Left cardiac atrium (tissue), 4 donors: ENCODE measurements at regions of chr13 and their contacts with region 1.

Region 1: DNA sequence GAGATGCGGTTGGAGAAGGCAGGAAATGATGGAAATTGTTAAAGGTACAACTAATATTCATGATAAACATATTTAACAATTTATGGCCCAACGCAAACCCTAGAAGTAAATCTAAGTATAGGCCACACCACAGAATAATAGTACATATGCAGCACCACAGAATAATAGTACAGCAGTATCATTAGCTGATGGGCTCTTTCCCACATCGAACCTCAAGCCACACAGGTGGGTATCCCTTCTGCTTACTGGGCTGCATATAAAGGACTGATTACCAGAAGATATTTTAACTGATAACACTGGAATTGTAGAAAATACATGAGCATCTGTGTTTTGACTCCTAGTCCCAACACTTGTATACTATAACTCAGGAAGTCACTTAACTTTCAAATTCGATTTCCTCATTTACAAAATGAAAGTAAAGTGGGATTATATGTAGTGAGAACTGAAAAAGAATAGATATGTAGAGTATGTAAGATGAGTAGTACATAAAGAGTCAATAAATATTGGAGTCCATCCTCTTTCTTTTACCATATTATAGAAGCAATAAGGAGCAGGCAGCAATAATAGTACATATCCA is 91.5 kb downstream of the TSC22D1 start:
- DNase-seq: no peak
- ATAC-seq: no peak

Region 2: GRCh38 chr13:44380404-44381165 is 104.1 kb before region 1 on chr13:
- intact Hi-C with region 1: no loop called
- DNase-seq: no peak
- ATAC-seq: no peak

Region 3: GRCh38 chr13:44577236-44578066 is 92.8 kb after region 1 on chr13:
- intact Hi-C with region 1: loop called in 1 of 2 experiments (anchors 10 kb)
- DNase-seq: peak; percentile 98
- ATAC-seq: peak; percentile 90 to 92

Region 4: DNA sequence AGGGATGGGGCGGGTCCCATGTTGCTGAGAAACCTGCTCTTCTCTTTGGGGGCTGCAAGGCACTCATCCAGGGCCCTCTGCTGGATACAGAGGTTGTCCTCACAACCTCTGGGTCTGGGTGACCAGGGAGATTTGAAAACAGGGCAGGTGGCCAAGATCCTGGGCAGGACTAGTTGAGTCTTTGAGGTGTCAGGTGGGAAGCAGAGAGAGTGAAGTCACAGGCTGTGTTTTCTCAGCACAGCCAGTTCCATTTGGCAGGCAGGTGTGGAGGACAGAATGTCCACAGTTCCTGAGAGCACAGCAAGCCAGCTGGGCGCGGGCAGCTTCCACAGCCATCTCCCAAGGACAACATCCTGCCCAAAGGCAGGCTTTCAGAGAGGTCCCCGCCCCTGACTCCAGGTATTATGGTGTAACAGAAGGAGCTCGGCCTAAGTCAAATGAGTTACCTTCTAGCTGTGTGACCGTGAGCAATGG is 385.8 kb after region 1 on chr13:
- intact Hi-C with region 1: loop called in 1 of 2 experiments (anchors 5 kb)
- DNase-seq: peak; percentile 71
- ATAC-seq: peak; percentile 40 to 77

Region 5: GRCh38 chr13:44904967-44905366 is 420.3 kb after region 1 on chr13:
- intact Hi-C with region 1: no loop called
- DNase-seq: peak; percentile 45
- ATAC-seq: peak; percentile 25 to 84

Region 6: GRCh38 chr13:44969551-44970484 is 485.2 kb after region 1 on chr13:
- intact Hi-C with region 1: loop called (anchors 2 to 5 kb)
- DNase-seq: no peak
- ATAC-seq: peak; percentile 55 to 74